H1 (cell line): ENCODE measurements at regions of chr11 and their contacts with region 1.

Region 1: DNA sequence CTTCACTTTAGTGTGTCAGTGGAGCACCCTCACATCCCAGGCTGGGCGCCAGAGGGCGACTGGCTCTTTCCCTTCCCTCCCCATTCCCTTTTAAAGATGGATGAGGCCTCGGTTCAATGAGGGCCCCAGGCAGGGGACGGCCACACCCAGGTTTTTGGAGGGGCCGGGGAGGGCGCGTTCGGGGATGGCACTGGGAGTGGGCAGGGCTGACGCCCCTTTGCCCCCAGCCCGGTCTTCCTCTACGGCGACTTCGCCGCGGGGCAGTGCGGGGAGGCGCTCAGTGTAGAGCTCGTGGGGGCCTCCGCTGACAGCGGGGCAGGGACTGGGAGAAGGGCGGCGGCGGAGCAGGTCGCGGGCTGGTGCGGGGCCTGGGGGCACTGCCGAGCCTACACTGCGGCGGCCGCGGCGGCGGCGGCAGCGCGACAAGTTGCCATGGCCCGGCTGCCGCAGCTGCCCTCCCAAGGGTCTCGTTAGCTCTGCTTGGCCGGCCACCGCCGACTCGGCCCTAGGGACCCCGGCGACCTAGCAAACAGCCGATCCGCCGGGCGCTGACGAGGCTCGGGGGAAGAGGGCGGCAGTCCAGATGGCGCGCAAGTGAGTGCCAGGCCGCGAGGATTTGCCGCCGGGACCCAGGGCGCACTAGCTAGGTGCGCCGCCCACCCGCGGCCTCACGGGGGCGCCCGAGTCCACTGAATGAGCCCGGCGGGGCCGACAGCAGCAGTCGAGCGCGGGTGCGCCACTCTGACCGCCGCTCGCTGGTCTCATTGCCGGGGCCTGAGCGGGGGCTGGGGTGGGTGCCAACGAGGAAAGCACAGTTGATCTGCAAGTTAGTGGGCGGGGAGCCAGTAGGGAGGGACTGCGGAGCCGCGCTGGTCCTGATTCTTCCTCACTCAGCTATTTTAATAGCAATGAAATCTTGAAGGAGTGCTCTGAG is 92.7 kb downstream of the RRM1 start:
- DNase-seq: peak; percentile 60 to 98
- H3K4me3 ChIP-seq: peak overlapping the region; percentile 42 to 76 (median 67)
- H3K27ac ChIP-seq: no peak overlapping the region; the same call in 1 of the 2 replicates
- H3K4me1 ChIP-seq: peaks cover 0 to 3% (median 1%) of the 10 kb centered on the region in 4 experiments; a peak in 3 of 7 replicates
- H3K27me3 ChIP-seq: peaks cover 0 to 8% (median 3%) of the 10 kb centered on the region in 4 experiments; a peak in 4 of 7 replicates
- CTCF ChIP-seq: peak; percentile 85 to 98 (median 86)
- EP300 ChIP-seq: no peak
- POLR2A ChIP-seq: 0 out of 3 replicates have a peak, but pooled peaks of 1 of the 2 experiments have one; percentile 34
- RAD21 ChIP-seq: peak; percentile 96 to 99

Region 2: GRCh38 chr11:3920148-3920852 is 267.0 kb before region 1 on chr11:
- CTCF ChIA-PET with region 1: no interaction called
- POLR2A ChIA-PET with region 1: no interaction called
- DNase-seq: no peak
- H3K4me3 ChIP-seq: no peak overlapping the region
- H3K27ac ChIP-seq: no peak overlapping the region
- H3K4me1 ChIP-seq: no peaks in the 10 kb centered on the region
- H3K27me3 ChIP-seq: peaks cover 0 to 1% (median 0%) of the 10 kb centered on the region in 4 experiments; a peak in 1 of 7 replicates
- CTCF ChIP-seq: no peak
- EP300 ChIP-seq: no peak
- POLR2A ChIP-seq: no peak
- RAD21 ChIP-seq: no peak

Region 3: DNA sequence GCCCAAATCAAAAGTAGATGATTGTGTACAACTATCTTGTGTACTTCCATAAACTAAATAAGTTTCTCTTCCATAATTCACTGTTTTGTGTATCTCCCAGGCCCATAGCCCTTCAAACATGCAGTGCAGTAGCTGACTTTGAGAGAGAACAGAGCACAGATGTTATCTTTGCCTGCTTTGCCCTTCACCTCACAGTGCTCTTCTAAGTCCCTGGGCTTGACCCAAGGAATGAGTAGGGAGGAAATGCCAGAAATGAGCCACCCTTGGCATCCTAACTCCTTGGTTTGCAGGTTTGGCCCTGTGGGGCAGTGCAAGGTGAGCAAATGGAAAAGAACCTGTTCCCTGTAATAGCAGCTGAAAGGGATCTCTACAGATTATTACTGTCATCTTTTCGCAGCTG is 252.7 kb before region 1 on chr11:
- CTCF ChIA-PET with region 1: no interaction called
- POLR2A ChIA-PET with region 1: no interaction called
- DNase-seq: no peak
- H3K4me3 ChIP-seq: no peak overlapping the region
- H3K27ac ChIP-seq: no peak overlapping the region
- H3K4me1 ChIP-seq: no peaks in the 10 kb centered on the region
- H3K27me3 ChIP-seq: no peaks in the 10 kb centered on the region
- CTCF ChIP-seq: no peak
- EP300 ChIP-seq: no peak
- POLR2A ChIP-seq: no peak
- RAD21 ChIP-seq: no peak

Region 4: DNA sequence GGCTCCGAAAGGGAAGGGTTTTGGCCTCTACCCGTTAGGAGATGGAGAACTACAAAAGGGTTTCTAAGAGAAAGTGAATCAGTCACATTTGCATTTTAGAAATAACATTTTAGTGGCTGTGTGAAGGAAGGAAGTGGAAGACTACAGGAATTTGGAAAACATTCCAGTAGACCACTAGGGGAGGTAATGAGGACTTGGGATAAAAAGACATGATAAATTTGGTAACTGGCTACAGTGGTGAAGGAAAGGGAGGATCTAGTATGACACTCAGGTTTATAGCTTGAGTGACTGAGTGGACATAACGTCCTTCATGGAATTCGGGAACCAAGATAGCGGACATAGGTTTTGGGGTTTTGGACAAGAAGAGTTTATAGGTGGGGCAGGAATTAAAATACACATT is 99.8 kb before region 1 on chr11:
- CTCF ChIA-PET with region 1: no interaction called
- POLR2A ChIA-PET with region 1: no interaction called
- DNase-seq: no peak
- H3K4me3 ChIP-seq: no peak overlapping the region
- H3K27ac ChIP-seq: no peak overlapping the region
- H3K4me1 ChIP-seq: no peaks in the 10 kb centered on the region
- H3K27me3 ChIP-seq: 0 out of 7 replicates have a peak, but pooled peaks cover 0 to 4% (median 0%) of the 10 kb centered on the region in 4 experiments
- CTCF ChIP-seq: peak in 2 of 3 experiments; percentile 14 to 62; a peak in 2 of 4 replicates
- EP300 ChIP-seq: no peak
- POLR2A ChIP-seq: no peak
- RAD21 ChIP-seq: no peak

Region 5: DNA sequence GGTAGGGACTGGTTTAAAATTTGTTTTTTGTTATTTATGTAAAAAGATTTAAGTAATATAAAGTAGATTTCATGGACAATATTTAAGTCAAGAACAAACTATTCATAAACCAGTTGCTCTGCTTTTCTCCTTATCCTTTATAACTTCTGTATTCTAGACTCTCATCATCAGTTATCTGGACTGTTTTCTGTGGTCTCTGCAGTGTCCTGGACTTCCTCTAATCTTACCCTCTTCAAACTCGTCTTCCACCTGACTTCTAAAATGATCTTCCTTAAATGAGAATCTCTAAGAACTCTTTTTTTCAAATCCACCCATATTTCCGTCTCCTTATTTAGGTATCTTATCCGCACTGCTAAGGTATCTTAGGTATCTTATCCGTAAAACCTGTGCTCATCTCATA is 84.6 kb before region 1 on chr11:
- CTCF ChIA-PET with region 1: no interaction called
- POLR2A ChIA-PET with region 1: no interaction called
- DNase-seq: no peak
- H3K4me3 ChIP-seq: no peak overlapping the region
- H3K27ac ChIP-seq: no peak overlapping the region
- H3K4me1 ChIP-seq: no peaks in the 10 kb centered on the region
- H3K27me3 ChIP-seq: no peaks in the 10 kb centered on the region
- CTCF ChIP-seq: no peak
- EP300 ChIP-seq: no peak
- POLR2A ChIP-seq: no peak
- RAD21 ChIP-seq: no peak

Region 6: GRCh38 chr11:4203603-4204360 is 16.5 kb after region 1 on chr11:
- CTCF ChIA-PET with region 1: interaction called, 36 read pairs
- POLR2A ChIA-PET with region 1: no interaction called
- DNase-seq: no peak
- H3K4me3 ChIP-seq: no peak overlapping the region
- H3K27ac ChIP-seq: no peak overlapping the region
- H3K4me1 ChIP-seq: no peaks in the 10 kb centered on the region
- H3K27me3 ChIP-seq: no peaks in the 10 kb centered on the region
- CTCF ChIP-seq: peak; percentile 16 to 67 (median 51)
- EP300 ChIP-seq: no peak
- POLR2A ChIP-seq: no peak
- RAD21 ChIP-seq: peak; percentile 51 to 62

Region 7: DNA sequence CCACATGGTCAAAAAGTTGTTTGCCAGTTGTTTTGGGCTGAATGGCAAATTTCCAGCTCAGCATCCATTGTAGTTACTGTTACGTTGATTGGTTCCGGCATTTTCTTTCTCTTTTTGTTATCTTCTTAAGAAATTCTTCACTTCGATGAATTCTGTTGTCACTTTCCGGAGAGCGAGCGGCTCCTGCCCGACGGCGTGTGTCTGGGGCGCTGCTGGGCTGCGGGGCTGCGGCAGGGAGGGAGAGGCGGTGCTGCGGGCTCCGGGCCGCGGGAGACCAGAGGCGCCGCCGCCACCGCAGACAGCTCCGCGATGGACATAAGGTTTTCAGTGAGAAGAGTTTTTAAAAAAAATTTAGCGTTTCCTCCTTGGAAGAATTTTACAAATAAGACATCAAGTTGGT is 24.7 kb after region 1 on chr11:
- CTCF ChIA-PET with region 1: interaction called, 12 read pairs
- POLR2A ChIA-PET with region 1: no interaction called
- DNase-seq: peak in 1 of 2 experiments; percentile 62
- H3K4me3 ChIP-seq: peak overlapping the region in 3 of 4 experiments; percentile 4 to 47 (median 17); a peak in 3 of 8 replicates
- H3K27ac ChIP-seq: no peak overlapping the region
- H3K4me1 ChIP-seq: no peaks in the 10 kb centered on the region
- H3K27me3 ChIP-seq: peaks cover 0 to 15% (median 9%) of the 10 kb centered on the region in 4 experiments; a peak in 4 of 7 replicates
- CTCF ChIP-seq: no peak
- EP300 ChIP-seq: no peak
- POLR2A ChIP-seq: no peak
- RAD21 ChIP-seq: 0 out of 4 replicates have a peak, but pooled peaks of 1 of the 2 experiments have one; percentile 7

Region 8: GRCh38 chr11:4496557-4497275 is 309.4 kb after region 1 on chr11:
- CTCF ChIA-PET with region 1: interaction called, 104 read pairs
- POLR2A ChIA-PET with region 1: no interaction called
- DNase-seq: no peak
- H3K4me3 ChIP-seq: no peak overlapping the region
- H3K27ac ChIP-seq: no peak overlapping the region
- H3K4me1 ChIP-seq: no peaks in the 10 kb centered on the region
- H3K27me3 ChIP-seq: no peaks in the 10 kb centered on the region
- CTCF ChIP-seq: no peak
- EP300 ChIP-seq: no peak
- POLR2A ChIP-seq: no peak
- RAD21 ChIP-seq: no peak

Region 9: GRCh38 chr11:4551346-4551979 is 364.1 kb after region 1 on chr11:
- CTCF ChIA-PET with region 1: interaction called, 22 read pairs
- POLR2A ChIA-PET with region 1: no interaction called
- DNase-seq: no peak
- H3K4me3 ChIP-seq: no peak overlapping the region
- H3K27ac ChIP-seq: no peak overlapping the region
- H3K4me1 ChIP-seq: no peaks in the 10 kb centered on the region
- H3K27me3 ChIP-seq: no peaks in the 10 kb centered on the region
- CTCF ChIP-seq: peak in 2 of 3 experiments; percentile 34 to 51; a peak in 3 of 4 replicates
- EP300 ChIP-seq: no peak
- POLR2A ChIP-seq: no peak
- RAD21 ChIP-seq: peak; percentile 33 to 44

Region 10: DNA sequence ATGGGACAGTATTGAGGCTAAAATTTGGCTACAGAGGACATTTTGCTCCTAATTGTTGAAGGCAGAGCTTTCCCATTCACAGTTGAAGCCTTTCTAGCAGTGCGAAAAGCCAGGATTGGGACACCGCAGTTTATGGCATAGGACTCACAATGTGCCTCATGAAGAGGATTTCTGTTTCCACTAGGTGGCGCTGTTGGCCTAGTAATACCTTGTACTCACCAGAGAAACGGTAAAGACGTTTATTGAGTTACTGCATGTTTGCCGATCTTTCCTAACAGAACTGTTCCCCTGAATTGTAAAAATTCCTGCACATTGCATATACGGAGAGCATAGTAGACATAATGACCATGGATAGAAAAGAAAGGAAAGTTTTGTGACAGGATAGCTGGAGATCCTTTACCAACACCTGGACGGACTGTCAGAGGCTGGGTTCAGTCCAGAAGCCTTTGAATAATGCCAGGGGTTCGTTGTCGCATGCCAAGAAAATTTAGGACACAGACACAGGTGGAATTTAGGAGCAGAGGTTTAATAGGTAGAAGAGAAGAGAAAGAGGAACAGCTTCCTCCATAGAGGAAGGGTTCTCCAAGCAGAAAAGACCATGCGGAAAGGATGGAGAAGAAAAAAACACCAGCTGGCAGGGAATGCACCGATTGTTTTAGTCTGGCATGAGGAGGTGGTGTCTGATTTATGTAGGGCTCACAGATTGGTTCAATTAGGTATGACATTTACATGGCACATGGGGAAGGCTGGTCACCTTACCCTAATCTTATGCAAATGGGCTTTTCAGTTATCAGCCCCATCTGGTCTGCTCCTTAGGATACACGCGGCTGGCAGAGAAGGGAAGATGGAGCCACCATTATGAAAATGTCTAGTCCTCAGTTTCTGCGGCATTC is 439.1 kb after region 1 on chr11:
- CTCF ChIA-PET with region 1: interaction called, 16 read pairs
- POLR2A ChIA-PET with region 1: no interaction called
- DNase-seq: peak in 1 of 2 experiments; percentile 84
- H3K4me3 ChIP-seq: no peak overlapping the region
- H3K27ac ChIP-seq: no peak overlapping the region
- H3K4me1 ChIP-seq: no peaks in the 10 kb centered on the region
- H3K27me3 ChIP-seq: no peaks in the 10 kb centered on the region
- CTCF ChIP-seq: peak; percentile 4 to 81 (median 65)
- EP300 ChIP-seq: no peak
- POLR2A ChIP-seq: no peak
- RAD21 ChIP-seq: peak; percentile 93